ENCODE measurements at regions of chr2 and their contacts with region 1.

Region 1: DNA sequence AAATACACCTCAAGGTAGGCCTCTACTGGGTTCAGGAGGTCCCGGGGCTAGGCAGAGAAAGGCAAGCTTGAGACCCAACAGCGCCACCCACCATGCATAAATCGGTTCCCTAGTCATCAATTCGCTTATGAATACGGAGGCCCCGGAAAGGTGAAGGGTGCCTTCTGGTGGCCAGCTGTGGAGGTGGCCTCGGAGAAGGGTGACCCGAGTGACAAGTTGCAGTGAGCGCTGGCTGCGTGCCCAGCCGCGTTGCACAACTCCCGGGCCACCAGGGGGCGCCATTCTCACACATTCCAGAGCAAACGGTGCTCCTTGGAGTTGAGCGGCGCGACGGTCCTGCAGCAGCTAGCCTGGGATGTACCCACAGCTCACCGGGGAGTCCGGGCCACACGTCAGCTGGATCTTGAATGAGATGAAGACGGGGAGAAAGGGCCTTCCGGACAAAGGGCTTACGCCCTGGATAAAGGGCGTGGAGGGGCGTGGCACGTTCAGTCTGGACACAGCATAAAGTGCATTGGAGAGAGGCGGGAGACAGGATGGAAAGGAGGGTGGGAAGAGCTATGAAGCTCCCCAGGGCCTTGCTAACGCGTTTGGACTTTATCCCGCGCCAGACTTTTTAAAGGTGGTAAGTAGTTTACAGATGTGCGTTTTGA is 20.4 kb downstream of the TMSB10 start:
- DNase-seq: peak; percentile 95 to 100 (median 99)
- ATAC-seq: peak; percentile 80
- H3K4me3 ChIP-seq: peak overlapping the region; percentile 73
- H3K4me3 Mint-ChIP-seq: peak overlapping the region; percentile 91
- H3K27ac ChIP-seq: peak overlapping the region; percentile 20 to 69
- H3K27ac Mint-ChIP-seq: peak overlapping the region; percentile 85
- H3K4me1 ChIP-seq: peaks cover 56% of the 10 kb centered on the region
- H3K4me1 Mint-ChIP-seq: peaks cover 38% of the 10 kb centered on the region
- H3K27me3 ChIP-seq: no peaks in the 10 kb centered on the region
- H3K27me3 Mint-ChIP-seq: no peaks in the 10 kb centered on the region
- CTCF ChIP-seq: peak; percentile 99

Region 2: GRCh38 chr2:84676295-84676694 is 249.6 kb before region 1 on chr2:
- CTCF ChIA-PET with region 1: no interaction called
- POLR2A ChIA-PET with region 1: no interaction called
- intact Hi-C with region 1: no loop called
- DNase-seq: no peak
- ATAC-seq: no peak
- H3K4me3 ChIP-seq: no peak overlapping the region
- H3K4me3 Mint-ChIP-seq: no peak overlapping the region
- H3K27ac ChIP-seq: no peak overlapping the region
- H3K27ac Mint-ChIP-seq: no peak overlapping the region
- H3K4me1 ChIP-seq: peaks cover 9% of the 10 kb centered on the region
- H3K4me1 Mint-ChIP-seq: peaks cover 49% of the 10 kb centered on the region
- H3K27me3 ChIP-seq: no peaks in the 10 kb centered on the region
- H3K27me3 Mint-ChIP-seq: no peaks in the 10 kb centered on the region
- CTCF ChIP-seq: no peak

Region 3: GRCh38 chr2:84781942-84782716 is 143.7 kb before region 1 on chr2:
- CTCF ChIA-PET with region 1: interaction called, 5 read pairs
- POLR2A ChIA-PET with region 1: interaction called, 3 read pairs
- intact Hi-C with region 1: loop called in 1 of 2 experiments (anchors 5 kb)
- DNase-seq: peak; percentile 25 to 91 (median 57)
- ATAC-seq: peak; percentile 83
- H3K4me3 ChIP-seq: no peak overlapping the region
- H3K4me3 Mint-ChIP-seq: peak overlapping the region; percentile 81
- H3K27ac ChIP-seq: peak overlapping the region; percentile 67 to 70
- H3K27ac Mint-ChIP-seq: peak overlapping the region; percentile 90
- H3K4me1 ChIP-seq: peaks cover 47% of the 10 kb centered on the region
- H3K4me1 Mint-ChIP-seq: peaks cover 93% of the 10 kb centered on the region
- H3K27me3 ChIP-seq: no peaks in the 10 kb centered on the region
- H3K27me3 Mint-ChIP-seq: no peaks in the 10 kb centered on the region
- CTCF ChIP-seq: no peak

Region 4: GRCh38 chr2:84856787-84857186 is 69.1 kb before region 1 on chr2:
- CTCF ChIA-PET with region 1: interaction called, 17 read pairs
- POLR2A ChIA-PET with region 1: interaction called, 6 read pairs
- intact Hi-C with region 1: no loop called
- DNase-seq: peak in 5 of 14 experiments; percentile 37 to 65 (median 55)
- ATAC-seq: peak; percentile 51
- H3K4me3 ChIP-seq: no peak overlapping the region
- H3K4me3 Mint-ChIP-seq: peak overlapping the region; percentile 32
- H3K27ac ChIP-seq: peak overlapping the region; percentile 53 to 69
- H3K27ac Mint-ChIP-seq: peak overlapping the region; percentile 94
- H3K4me1 ChIP-seq: peaks cover 95% of the 10 kb centered on the region
- H3K4me1 Mint-ChIP-seq: peaks cover 96% of the 10 kb centered on the region
- H3K27me3 ChIP-seq: no peaks in the 10 kb centered on the region
- H3K27me3 Mint-ChIP-seq: no peaks in the 10 kb centered on the region
- CTCF ChIP-seq: no peak

Region 5: DNA sequence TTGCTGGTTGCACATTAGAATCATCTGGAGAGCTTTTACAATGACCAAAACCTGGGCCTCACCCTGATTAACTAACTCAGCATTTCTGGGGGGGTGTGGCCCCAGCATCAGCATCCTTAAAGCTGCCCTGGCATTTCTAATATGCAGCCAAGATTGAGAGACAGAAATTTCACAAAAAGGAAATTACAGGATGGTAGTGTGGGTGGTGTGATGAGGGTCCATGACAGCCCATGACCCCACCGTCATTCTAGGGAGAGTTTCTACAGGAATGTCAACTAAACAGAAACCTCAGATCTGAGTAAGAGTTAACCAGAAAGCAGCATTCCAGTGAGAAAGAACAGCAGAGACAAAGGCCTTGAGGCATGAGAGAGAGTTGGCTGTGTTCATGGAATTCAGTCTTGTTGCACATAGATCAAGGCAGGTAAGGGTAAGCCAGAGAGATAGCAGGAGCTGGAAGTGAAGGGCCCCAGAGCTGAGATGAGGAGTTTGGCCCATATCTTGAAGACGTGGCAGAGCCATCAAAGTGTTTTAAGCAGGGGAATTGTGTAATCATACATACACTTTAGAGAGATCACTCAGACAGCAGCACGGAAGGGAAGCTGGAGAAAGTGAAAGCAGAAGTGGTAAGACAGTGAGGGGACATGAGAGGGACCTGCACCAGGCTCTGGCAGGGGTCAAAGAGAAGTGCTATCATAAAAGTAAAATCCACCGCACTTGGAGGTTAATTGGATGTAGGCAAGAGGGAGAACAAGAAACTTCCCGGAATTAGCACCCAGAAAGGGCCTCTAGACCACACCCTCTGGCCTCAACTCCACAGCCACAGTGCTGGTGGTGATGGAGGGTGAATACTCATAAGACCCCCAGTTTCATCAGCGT is 37.2 kb before region 1 on chr2:
- CTCF ChIA-PET with region 1: interaction called, 50 read pairs
- POLR2A ChIA-PET with region 1: interaction called, 46 read pairs
- intact Hi-C with region 1: loop called in 1 of 2 experiments (anchors 2 kb)
- DNase-seq: peak in 10 of 14 experiments; percentile 29 to 89 (median 54)
- ATAC-seq: peak; percentile 95
- H3K4me3 ChIP-seq: peak overlapping the region; percentile 29
- H3K4me3 Mint-ChIP-seq: peak overlapping the region; percentile 77
- H3K27ac ChIP-seq: peak overlapping the region; percentile 75 to 76
- H3K27ac Mint-ChIP-seq: peak overlapping the region; percentile 93
- H3K4me1 ChIP-seq: peaks cover 28% of the 10 kb centered on the region
- H3K4me1 Mint-ChIP-seq: peaks cover 46% of the 10 kb centered on the region
- H3K27me3 ChIP-seq: no peaks in the 10 kb centered on the region
- H3K27me3 Mint-ChIP-seq: no peaks in the 10 kb centered on the region
- CTCF ChIP-seq: no peak

Region 6: DNA sequence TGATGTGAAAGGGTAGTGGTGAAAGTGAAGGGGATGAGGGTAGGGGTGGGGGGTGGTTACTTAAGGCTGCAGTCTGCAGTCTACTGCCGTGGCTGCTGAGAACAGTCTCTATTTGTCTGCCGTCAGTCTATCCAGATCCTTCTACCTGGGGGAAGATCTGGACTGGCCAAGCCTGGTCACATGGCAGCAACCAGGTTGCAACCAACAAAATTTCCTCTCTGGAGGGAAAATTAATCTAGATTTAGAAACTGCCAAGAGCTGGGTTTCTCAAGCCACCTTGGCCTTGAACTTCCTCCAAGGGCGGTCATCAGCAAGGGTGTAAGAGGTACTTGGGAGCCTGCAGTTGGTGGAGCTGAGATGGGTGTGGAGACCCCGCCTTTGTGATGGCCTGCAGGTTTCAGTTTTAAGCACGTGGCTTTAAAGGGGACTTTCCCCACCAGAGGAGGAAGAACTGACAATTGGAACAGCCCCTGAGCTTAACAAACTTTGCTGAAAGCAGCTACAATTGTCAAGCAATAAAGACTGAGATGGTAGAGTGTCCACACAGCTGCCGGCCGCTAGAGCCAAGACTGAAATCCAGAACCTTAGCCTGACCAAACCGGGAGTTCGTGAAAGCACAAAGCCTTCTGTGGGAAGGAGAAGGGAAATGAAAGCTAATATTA is 13.7 kb after region 1 on chr2:
- CTCF ChIA-PET with region 1: interaction called, 117 read pairs
- POLR2A ChIA-PET with region 1: interaction called, 47 read pairs
- intact Hi-C with region 1: loop called in 1 of 2 experiments (anchors 2 kb)
- DNase-seq: peak; percentile 29 to 92 (median 54)
- ATAC-seq: peak; percentile 85
- H3K4me3 ChIP-seq: peak overlapping the region; percentile 33
- H3K4me3 Mint-ChIP-seq: peak overlapping the region; percentile 66
- H3K27ac ChIP-seq: peak overlapping the region; percentile 64 to 82
- H3K27ac Mint-ChIP-seq: peak overlapping the region; percentile 89
- H3K4me1 ChIP-seq: peaks cover 29% of the 10 kb centered on the region
- H3K4me1 Mint-ChIP-seq: peaks cover 35% of the 10 kb centered on the region
- H3K27me3 ChIP-seq: no peaks in the 10 kb centered on the region
- H3K27me3 Mint-ChIP-seq: no peaks in the 10 kb centered on the region
- CTCF ChIP-seq: no peak

Region 7: DNA sequence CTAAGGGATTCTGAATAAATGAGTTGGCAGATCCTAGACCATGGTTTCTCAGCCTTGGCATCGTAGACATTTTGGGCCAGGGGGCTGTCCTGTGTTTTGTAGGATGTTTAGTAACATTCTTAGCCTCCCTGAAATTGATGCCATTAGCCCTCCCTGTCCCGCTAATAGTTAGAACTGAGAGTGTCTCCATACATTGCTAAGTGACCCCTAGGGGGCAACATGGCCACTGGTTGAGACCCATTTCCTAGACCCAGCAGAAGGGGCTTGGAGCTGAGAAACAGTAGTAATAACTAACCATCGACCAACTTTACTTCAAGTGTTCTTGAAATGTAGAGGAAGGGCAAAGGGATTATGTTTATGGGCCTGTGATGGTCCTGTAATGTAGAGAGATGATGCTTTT is 85.9 kb after region 1 on chr2:
- CTCF ChIA-PET with region 1: interaction called, 10 read pairs
- POLR2A ChIA-PET with region 1: interaction called, 18 read pairs
- intact Hi-C with region 1: loop called (anchors 1 kb)
- DNase-seq: peak in 1 of 14 experiments; percentile 27
- ATAC-seq: no peak
- H3K4me3 ChIP-seq: no peak overlapping the region
- H3K4me3 Mint-ChIP-seq: no peak overlapping the region
- H3K27ac ChIP-seq: no peak overlapping the region
- H3K27ac Mint-ChIP-seq: peak overlapping the region; percentile 22
- H3K4me1 ChIP-seq: peaks cover 28% of the 10 kb centered on the region
- H3K4me1 Mint-ChIP-seq: peaks cover 88% of the 10 kb centered on the region
- H3K27me3 ChIP-seq: no peaks in the 10 kb centered on the region
- H3K27me3 Mint-ChIP-seq: no peaks in the 10 kb centered on the region
- CTCF ChIP-seq: no peak